ENCODE measurements at regions of chr11 and their contacts with region 1.

Region 1: GRCh38 chr11:12281571-12282478 is 95.5 kb upstream of the PARVA start:
- DNase-seq: peak; percentile 89
- ATAC-seq: peak; percentile 76
- H3K4me3 Mint-ChIP-seq: no peak overlapping the region
- H3K27ac Mint-ChIP-seq: peak overlapping the region; percentile 14
- H3K4me1 Mint-ChIP-seq: peaks cover 18% of the 10 kb centered on the region
- H3K27me3 Mint-ChIP-seq: no peaks in the 10 kb centered on the region

Region 2: GRCh38 chr11:11916981-11917399 is 364.8 kb before region 1 on chr11:
- CTCF ChIA-PET with region 1: no interaction called
- POLR2A ChIA-PET with region 1: no interaction called
- intact Hi-C with region 1: no loop called
- DNase-seq: no peak
- ATAC-seq: no peak
- H3K4me3 Mint-ChIP-seq: no peak overlapping the region
- H3K27ac Mint-ChIP-seq: peak overlapping the region; percentile 23
- H3K4me1 Mint-ChIP-seq: no peaks in the 10 kb centered on the region
- H3K27me3 Mint-ChIP-seq: no peaks in the 10 kb centered on the region

Region 3: DNA sequence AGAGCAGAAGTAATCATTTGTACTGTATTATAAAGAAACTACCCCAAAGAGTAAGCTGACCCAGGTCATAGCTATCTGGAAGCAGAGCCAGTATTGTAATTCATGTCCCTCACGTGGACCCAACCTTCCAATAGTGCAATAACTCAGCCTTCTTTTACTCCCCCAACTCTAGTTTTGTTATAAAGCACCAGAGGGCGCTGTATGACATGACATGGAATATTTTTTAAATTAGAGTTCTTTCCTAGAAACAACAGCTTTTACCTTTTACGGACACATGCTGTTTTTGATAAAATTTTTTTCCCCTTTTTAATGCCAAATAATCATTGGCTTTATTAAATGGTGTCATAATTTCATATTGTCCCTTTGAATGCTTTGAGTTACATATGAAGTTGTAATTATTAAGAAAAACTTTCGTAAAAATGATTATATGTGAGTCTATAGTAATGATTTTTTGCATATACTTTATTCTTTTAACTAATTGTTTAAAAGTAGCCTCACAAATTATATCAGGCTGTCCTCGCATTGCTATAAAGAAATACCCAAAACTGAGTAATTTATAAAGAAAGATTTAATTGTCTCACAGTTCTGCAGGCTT is 350.3 kb before region 1 on chr11:
- CTCF ChIA-PET with region 1: interaction called, 8 read pairs
- POLR2A ChIA-PET with region 1: no interaction called
- intact Hi-C with region 1: loop called (anchors 5 to 10 kb)
- DNase-seq: peak; percentile 10
- ATAC-seq: no peak
- H3K4me3 Mint-ChIP-seq: no peak overlapping the region
- H3K27ac Mint-ChIP-seq: no peak overlapping the region
- H3K4me1 Mint-ChIP-seq: no peaks in the 10 kb centered on the region
- H3K27me3 Mint-ChIP-seq: no peaks in the 10 kb centered on the region

Region 4: GRCh38 chr11:12043959-12044819 is 237.6 kb before region 1 on chr11:
- CTCF ChIA-PET with region 1: interaction called, 168 read pairs
- POLR2A ChIA-PET with region 1: no interaction called
- intact Hi-C with region 1: loop called (anchors 1 kb)
- DNase-seq: peak; percentile 80
- ATAC-seq: peak; percentile 73
- H3K4me3 Mint-ChIP-seq: no peak overlapping the region
- H3K27ac Mint-ChIP-seq: no peak overlapping the region
- H3K4me1 Mint-ChIP-seq: peaks cover 11% of the 10 kb centered on the region
- H3K27me3 Mint-ChIP-seq: peaks cover 4% of the 10 kb centered on the region

Region 5: GRCh38 chr11:12052676-12053605 is 228.9 kb before region 1 on chr11:
- CTCF ChIA-PET with region 1: interaction called, 168 read pairs
- POLR2A ChIA-PET with region 1: interaction called, 4 read pairs
- intact Hi-C with region 1: no loop called
- DNase-seq: peak; percentile 54
- ATAC-seq: peak; percentile 60
- H3K4me3 Mint-ChIP-seq: no peak overlapping the region
- H3K27ac Mint-ChIP-seq: no peak overlapping the region
- H3K4me1 Mint-ChIP-seq: peaks cover 4% of the 10 kb centered on the region
- H3K27me3 Mint-ChIP-seq: no peaks in the 10 kb centered on the region

Region 6: GRCh38 chr11:12102588-12103410 is 179.0 kb before region 1 on chr11:
- CTCF ChIA-PET with region 1: interaction called, 11 read pairs
- POLR2A ChIA-PET with region 1: no interaction called
- intact Hi-C with region 1: no loop called
- DNase-seq: no peak
- ATAC-seq: no peak
- H3K4me3 Mint-ChIP-seq: no peak overlapping the region
- H3K27ac Mint-ChIP-seq: no peak overlapping the region
- H3K4me1 Mint-ChIP-seq: peaks cover 9% of the 10 kb centered on the region
- H3K27me3 Mint-ChIP-seq: peaks cover 5% of the 10 kb centered on the region

Region 7: GRCh38 chr11:12159351-12160099 is 122.3 kb before region 1 on chr11:
- CTCF ChIA-PET with region 1: interaction called, 3 read pairs
- POLR2A ChIA-PET with region 1: no interaction called
- intact Hi-C with region 1: loop called (anchors 5 kb)
- DNase-seq: no peak
- ATAC-seq: peak; percentile 39
- H3K4me3 Mint-ChIP-seq: no peak overlapping the region
- H3K27ac Mint-ChIP-seq: peak overlapping the region; percentile 89
- H3K4me1 Mint-ChIP-seq: peaks cover 71% of the 10 kb centered on the region
- H3K27me3 Mint-ChIP-seq: no peaks in the 10 kb centered on the region

Region 8: GRCh38 chr11:12260731-12261521 is 20.9 kb before region 1 on chr11:
- CTCF ChIA-PET with region 1: interaction called, 10 read pairs
- POLR2A ChIA-PET with region 1: no interaction called
- intact Hi-C with region 1: no loop called
- DNase-seq: no peak
- ATAC-seq: no peak
- H3K4me3 Mint-ChIP-seq: no peak overlapping the region
- H3K27ac Mint-ChIP-seq: no peak overlapping the region
- H3K4me1 Mint-ChIP-seq: no peaks in the 10 kb centered on the region
- H3K27me3 Mint-ChIP-seq: no peaks in the 10 kb centered on the region

Region 9: DNA sequence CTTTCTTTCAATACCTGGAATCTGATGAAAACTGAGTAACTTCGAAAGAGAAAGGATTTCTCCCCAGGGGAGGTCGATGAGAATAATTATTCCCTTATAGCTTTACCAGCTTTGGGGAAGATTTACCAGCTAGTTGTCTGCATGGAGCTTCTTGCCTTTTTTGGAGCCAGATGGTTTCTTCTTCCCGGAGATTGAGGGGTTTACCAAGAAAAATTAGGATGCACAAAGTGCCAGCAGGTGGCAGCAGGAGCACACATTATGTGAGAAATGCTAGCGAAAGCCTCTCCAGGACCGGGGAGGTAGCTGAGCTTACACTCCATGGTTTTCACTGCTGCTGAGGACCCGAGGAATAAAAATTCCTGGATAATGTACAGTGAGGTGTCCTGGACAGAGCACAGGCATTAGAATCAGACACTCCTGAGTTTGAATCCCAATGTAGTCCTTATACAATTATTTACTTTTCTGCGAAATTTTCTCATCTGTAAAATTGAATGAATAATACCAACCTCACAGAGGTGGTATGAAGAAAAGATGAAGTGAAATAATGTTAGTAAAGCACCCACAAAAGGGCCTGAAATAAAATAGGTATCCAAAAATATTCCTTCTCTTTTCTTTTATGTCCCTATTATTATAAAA is 49.5 kb after region 1 on chr11:
- CTCF ChIA-PET with region 1: no interaction called
- POLR2A ChIA-PET with region 1: no interaction called
- intact Hi-C with region 1: no loop called
- DNase-seq: peak; percentile 85
- ATAC-seq: peak; percentile 36
- H3K4me3 Mint-ChIP-seq: no peak overlapping the region
- H3K27ac Mint-ChIP-seq: no peak overlapping the region
- H3K4me1 Mint-ChIP-seq: peaks cover 3% of the 10 kb centered on the region
- H3K27me3 Mint-ChIP-seq: no peaks in the 10 kb centered on the region

Region 10: GRCh38 chr11:13023423-13023822 is 741.6 kb after region 1 on chr11:
- CTCF ChIA-PET with region 1: no interaction called
- POLR2A ChIA-PET with region 1: no interaction called
- intact Hi-C with region 1: no loop called
- DNase-seq: no peak
- ATAC-seq: no peak
- H3K4me3 Mint-ChIP-seq: no peak overlapping the region
- H3K27ac Mint-ChIP-seq: no peak overlapping the region
- H3K4me1 Mint-ChIP-seq: no peaks in the 10 kb centered on the region
- H3K27me3 Mint-ChIP-seq: peaks cover 21% of the 10 kb centered on the region